CD4-positive, alpha-beta T cell (primary cell): ENCODE measurements at regions of chr1 and their contacts with region 1.

Region 1: DNA sequence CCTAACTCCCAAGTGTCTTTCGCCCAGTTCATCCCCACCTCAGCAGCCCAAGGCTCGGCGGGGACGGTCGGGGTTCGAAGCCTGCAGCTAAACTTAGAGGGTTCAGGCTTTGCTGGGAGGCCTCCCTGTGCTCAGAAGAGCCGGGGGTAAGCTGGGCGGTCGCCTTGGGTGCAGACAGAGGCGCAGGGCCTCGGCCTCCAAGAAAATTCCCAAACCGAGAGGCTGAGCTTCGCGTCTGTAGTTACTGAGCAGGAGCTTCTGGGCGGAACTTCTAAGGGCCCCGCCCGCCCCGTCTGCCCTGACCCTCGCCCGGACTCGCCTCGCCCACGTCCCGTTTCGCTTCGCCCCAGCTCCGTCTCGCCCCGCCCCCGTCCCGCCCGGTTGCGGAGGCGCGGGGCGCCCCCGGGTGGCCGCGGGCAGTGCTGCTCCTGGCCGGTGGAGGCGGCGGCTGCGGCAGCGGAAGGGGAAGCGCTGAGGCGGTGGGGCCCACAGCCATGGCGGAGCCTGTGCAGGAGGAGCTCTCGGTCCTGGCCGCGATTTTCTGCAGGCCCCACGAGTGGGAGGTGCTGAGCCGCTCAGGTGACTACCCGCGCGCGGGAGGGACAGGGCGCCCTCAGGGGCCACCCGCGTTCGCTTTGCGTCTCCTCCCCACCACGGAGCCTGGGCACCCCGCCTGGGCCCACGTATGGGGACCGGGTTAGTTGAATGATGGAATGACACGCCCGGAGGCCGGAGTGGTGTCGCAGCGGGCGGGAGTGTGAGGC is at the start of gene RWDD3:
- DNase-seq: peak; percentile 82 to 97 (median 93)
- ATAC-seq: peak; percentile 94
- H3K4me3 ChIP-seq: peak within 1 kb of the TSS; percentile 85
- H3K4me3 Mint-ChIP-seq: peak within 1 kb of the TSS; percentile 95
- H3K27ac ChIP-seq: peak within 1 kb of the TSS; percentile 33 to 53
- H3K27ac Mint-ChIP-seq: peak within 1 kb of the TSS; percentile 86
- H3K4me1 ChIP-seq: peaks cover 22% of the 10 kb centered on the region
- H3K4me1 Mint-ChIP-seq: peaks cover 51% of the 10 kb centered on the region
- H3K27me3 ChIP-seq: no peaks in the 10 kb centered on the region
- H3K27me3 Mint-ChIP-seq: peaks cover 22% of the 10 kb centered on the region
- CTCF ChIP-seq: peak; percentile 78
- total RNA-seq, gene RWDD3: 14.3 to 14.5 TPM

Region 2: DNA sequence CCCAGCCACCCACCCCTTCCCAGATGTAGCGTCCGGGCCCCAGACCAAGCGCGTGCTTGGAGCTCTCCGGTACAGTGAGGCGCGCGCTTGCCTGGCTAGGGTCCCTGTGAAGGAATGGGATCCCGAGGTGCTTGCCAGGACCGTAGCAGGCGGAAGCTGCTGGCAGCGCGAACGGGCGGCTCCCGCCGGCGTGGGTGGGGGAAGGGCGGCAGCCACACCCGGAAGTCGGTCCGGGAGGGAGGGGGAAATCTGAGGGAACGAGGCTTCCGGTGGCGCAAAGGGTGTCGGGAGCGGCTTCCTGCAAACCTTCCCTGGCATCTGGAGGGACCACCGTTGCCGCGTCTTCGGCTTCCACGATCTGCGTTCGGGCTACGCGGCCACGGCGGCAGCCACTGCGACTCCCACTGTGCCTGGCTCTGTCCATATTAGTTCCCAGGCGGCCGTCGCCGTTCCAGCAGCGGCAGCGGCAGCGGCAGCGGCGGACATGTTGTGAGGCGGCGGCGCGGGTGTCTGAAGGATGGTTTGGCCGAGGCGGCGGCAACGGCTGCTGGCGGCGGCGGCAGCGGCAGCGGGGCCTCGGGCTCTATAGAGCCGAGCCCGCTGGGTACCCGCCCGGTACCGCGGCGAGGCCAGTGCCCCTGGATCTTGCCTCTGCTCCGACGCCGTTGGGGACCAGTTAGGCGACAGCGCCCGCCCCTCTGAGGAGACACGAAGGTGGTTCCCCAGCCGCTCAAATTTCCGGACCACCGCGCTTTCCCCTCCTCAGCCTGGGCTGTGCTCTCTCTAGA is 1888.1 kb before region 1 on chr1 and contains the start of gene DR1:
- CTCF ChIA-PET with region 1: no interaction called
- POLR2A ChIA-PET with region 1: no interaction called
- intact Hi-C with region 1: loop called in 1 of 2 experiments (anchors 5 kb)
- DNase-seq: peak; percentile 85 to 94 (median 87)
- ATAC-seq: peak; percentile 79
- H3K4me3 ChIP-seq: peak within 1 kb of the TSS; percentile 90
- H3K4me3 Mint-ChIP-seq: peak within 1 kb of the TSS; percentile 99
- H3K27ac ChIP-seq: peak within 1 kb of the TSS; percentile 87 to 94
- H3K27ac Mint-ChIP-seq: peak within 1 kb of the TSS; percentile 96
- H3K4me1 ChIP-seq: peaks cover 9% of the 10 kb centered on the region
- H3K4me1 Mint-ChIP-seq: peaks cover 61% of the 10 kb centered on the region
- H3K27me3 ChIP-seq: no peaks in the 10 kb centered on the region
- H3K27me3 Mint-ChIP-seq: no peaks in the 10 kb centered on the region
- CTCF ChIP-seq: no peak
- total RNA-seq, gene DR1: 51.4 to 54.4 TPM

Region 3: DNA sequence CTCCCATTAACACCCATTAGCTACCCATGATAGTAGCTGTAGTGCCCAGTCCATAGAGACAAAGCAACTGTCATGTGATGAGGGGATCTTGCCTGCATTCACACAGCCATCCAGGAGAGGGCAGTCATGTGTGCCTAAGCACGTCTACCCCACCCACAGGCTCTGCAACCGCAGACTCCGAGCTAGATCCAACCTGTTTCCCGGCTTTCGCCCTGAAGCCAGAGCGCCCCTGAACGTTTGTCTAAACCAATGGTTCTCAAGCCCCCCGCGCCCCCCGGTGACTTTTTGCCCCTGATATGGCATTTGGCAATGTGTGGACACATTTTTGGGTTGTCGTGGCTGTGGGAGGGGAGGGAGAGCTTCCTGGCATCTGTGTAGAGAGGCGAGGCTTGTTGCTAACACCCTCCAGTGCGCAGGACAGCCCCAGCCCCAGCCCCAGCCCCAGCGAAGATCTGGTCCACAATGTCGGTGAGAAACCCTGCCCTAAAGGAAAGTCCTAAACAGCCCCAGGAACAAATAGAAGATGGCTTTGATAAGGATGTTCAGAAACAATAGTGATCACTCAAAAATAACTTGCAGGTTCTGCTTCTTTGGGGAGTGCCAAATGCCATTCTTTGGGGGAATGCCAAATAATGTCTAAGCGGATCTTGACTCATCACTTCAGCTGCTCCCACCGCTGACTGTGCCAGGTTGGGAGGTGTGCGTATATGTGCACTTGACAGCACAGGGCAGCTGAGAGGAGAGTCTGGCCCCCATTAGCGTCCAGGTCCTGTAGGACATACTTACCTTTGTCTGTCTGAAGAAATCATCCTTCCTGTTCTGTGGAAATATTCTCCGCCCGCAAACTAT is 379.2 kb before region 1 on chr1:
- CTCF ChIA-PET with region 1: interaction called, 15 read pairs
- POLR2A ChIA-PET with region 1: interaction called, 11 read pairs
- intact Hi-C with region 1: loop called (anchors 1 to 5 kb)
- DNase-seq: peak; percentile 58 to 89 (median 66)
- ATAC-seq: peak; percentile 98
- H3K4me3 ChIP-seq: peak overlapping the region; percentile 53
- H3K4me3 Mint-ChIP-seq: no peak overlapping the region
- H3K27ac ChIP-seq: no peak overlapping the region
- H3K27ac Mint-ChIP-seq: no peak overlapping the region
- H3K4me1 ChIP-seq: peaks cover 9% of the 10 kb centered on the region
- H3K4me1 Mint-ChIP-seq: no peaks in the 10 kb centered on the region
- H3K27me3 ChIP-seq: peaks cover 0 to 4% of the 10 kb centered on the region in 2 experiments
- H3K27me3 Mint-ChIP-seq: peaks cover 3% of the 10 kb centered on the region
- CTCF ChIP-seq: peak; percentile 80

Region 4: GRCh38 chr1:95084317-95085176 is 149.4 kb before region 1 on chr1:
- CTCF ChIA-PET with region 1: interaction called, 9 read pairs
- POLR2A ChIA-PET with region 1: interaction called, 4 read pairs
- intact Hi-C with region 1: loop called (anchors 5 kb)
- DNase-seq: peak in 6 of 14 experiments; percentile 4 to 58 (median 30)
- ATAC-seq: peak; percentile 49
- H3K4me3 ChIP-seq: no peak overlapping the region
- H3K4me3 Mint-ChIP-seq: no peak overlapping the region
- H3K27ac ChIP-seq: no peak overlapping the region
- H3K27ac Mint-ChIP-seq: no peak overlapping the region
- H3K4me1 ChIP-seq: no peaks in the 10 kb centered on the region
- H3K4me1 Mint-ChIP-seq: no peaks in the 10 kb centered on the region
- H3K27me3 ChIP-seq: peaks cover 0 to 17% of the 10 kb centered on the region in 2 experiments
- H3K27me3 Mint-ChIP-seq: peaks cover 28% of the 10 kb centered on the region
- CTCF ChIP-seq: peak; percentile 81

Region 5: DNA sequence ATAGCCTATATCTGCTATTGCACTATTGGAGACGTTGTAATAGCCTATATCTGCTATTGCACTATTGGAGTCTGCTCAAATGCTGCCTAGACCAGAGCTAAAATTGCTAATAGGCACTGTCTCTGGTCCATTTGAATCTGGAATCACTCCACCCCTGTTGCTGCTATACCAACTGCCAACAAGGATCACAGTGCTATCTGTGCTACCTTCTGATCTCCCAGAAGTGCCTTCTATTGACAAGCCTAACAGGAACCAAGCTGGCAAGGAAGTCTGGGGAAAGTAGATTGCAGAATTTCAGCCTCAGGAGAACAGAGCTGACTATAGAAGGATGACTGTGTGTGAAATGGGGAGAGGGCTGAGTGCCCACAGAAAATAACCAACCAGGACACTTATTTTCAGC is 16.0 kb after region 1 on chr1:
- CTCF ChIA-PET with region 1: interaction called, 16 read pairs
- POLR2A ChIA-PET with region 1: interaction called, 7 read pairs
- intact Hi-C with region 1: no loop called
- DNase-seq: no peak
- ATAC-seq: no peak
- H3K4me3 ChIP-seq: no peak overlapping the region
- H3K4me3 Mint-ChIP-seq: no peak overlapping the region
- H3K27ac ChIP-seq: no peak overlapping the region
- H3K27ac Mint-ChIP-seq: peak overlapping the region; percentile 14
- H3K4me1 ChIP-seq: no peaks in the 10 kb centered on the region
- H3K4me1 Mint-ChIP-seq: no peaks in the 10 kb centered on the region
- H3K27me3 ChIP-seq: no peaks in the 10 kb centered on the region
- H3K27me3 Mint-ChIP-seq: no peaks in the 10 kb centered on the region
- CTCF ChIP-seq: no peak